ENCODE measurements at regions of chr3 and their contacts with region 1.

Region 1: DNA sequence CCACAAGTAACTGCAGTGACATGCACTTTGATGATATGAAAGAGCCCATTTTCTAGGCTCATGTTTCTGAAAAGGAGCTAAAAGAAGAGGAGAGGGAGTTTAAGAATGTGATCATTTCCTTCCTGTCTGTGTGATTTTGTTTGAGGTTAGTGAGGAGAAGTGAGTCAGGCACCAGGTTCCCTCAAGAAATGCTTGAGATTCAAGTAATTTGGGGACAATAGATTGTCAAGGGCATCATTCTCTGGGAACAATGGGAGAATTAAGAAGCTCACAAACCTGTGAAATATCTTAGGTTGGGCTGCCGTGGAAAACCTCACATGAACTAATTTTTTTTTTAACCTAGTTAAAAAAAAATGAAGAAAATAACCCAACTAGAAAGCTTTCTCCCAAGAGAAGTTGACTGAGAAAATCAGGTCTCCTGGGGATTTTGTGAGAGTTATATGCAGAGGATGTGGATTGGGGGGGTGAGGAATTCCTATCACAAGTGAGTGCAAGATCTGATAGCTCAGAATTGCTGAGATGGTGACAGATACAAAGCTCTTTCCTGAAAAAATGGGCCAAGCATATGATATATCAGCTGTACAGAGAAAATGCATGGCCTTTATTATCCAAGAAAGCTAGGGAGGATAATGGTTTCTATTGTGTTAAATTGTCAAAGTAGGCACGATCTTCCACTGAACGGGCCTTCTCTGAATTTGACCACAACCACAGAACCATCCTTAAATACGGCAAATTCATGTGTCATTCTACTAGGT is 203.3 kb downstream of the FEZF2 start:
- DNase-seq: no peak
- ATAC-seq: no peak
- H3K4me3 ChIP-seq: no peak overlapping the region
- H3K27ac ChIP-seq: no peak overlapping the region
- H3K4me1 ChIP-seq: peaks cover 0 to 66% (median 38%) of the 10 kb centered on the region in 9 donors
- H3K27me3 ChIP-seq: no peaks in the 10 kb centered on the region
- CTCF ChIP-seq: no peak

Region 2: DNA sequence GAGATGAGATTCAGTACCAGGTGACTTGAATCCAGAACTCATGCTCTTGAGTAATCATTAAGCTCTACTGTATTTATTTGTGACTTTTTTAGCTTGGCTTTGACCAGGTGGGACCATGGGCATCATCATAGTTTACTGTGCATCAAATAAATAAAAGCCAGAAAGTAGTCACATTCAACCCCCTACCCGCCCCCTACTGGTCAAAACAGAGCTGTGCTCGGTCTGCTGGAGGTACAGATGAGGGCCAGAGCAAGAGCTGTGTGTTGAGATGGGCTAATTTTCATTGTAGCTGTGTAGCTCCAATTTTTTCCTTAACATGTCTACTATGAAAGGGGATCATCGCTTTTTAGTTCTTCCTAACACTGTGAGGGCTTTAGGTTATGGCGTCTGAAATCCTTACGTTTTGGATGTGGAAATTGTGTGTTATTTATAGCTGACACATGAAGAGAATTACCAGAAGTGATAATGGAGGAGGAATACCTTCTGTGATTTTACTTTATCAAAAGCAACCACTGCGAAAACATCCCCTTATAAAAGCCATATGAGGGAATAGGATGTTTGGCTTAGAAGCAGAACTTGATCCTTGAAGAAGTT is 233.6 kb before region 1 on chr3:
- intact Hi-C with region 1: loop called in 1 of 10 experiments (anchors 10 kb)
- DNase-seq: no peak
- ATAC-seq: peak in 2 of 8 donors; percentile 24 to 38
- H3K4me3 ChIP-seq: no peak overlapping the region
- H3K27ac ChIP-seq: no peak overlapping the region
- H3K4me1 ChIP-seq: peaks cover 0 to 31% (median 4%) of the 10 kb centered on the region in 9 donors
- H3K27me3 ChIP-seq: no peaks in the 10 kb centered on the region
- CTCF ChIP-seq: peak; percentile 5 to 54 (median 42)

Region 3: DNA sequence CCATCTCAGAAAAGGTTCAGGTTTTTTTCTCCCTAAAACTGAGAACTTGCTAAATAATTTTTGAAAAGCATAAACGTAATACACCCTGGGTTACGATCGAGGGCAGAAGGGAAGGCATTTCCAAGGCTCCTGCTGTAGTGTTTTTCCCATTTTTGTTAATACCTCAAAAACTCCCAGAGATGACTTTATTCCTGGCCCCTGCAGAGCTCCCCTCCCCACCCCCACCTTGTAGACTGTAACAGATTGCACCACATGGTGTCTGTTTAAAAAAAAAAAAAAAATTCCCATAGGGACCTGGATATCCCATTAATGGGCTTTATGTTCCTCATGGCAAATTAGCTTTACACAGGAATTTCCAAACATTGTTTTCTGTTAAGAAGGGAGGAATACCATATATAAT is 165.1 kb after region 1 on chr3:
- intact Hi-C with region 1: no loop called
- DNase-seq: no peak
- ATAC-seq: no peak
- H3K4me3 ChIP-seq: no peak overlapping the region
- H3K27ac ChIP-seq: no peak overlapping the region
- H3K4me1 ChIP-seq: no peaks in the 10 kb centered on the region
- H3K27me3 ChIP-seq: no peaks in the 10 kb centered on the region
- CTCF ChIP-seq: no peak

Measured in heart right ventricle (tissue), 16 donors.